ENCODE measurements at regions of chr18 and their contacts with region 1.

Region 1: DNA sequence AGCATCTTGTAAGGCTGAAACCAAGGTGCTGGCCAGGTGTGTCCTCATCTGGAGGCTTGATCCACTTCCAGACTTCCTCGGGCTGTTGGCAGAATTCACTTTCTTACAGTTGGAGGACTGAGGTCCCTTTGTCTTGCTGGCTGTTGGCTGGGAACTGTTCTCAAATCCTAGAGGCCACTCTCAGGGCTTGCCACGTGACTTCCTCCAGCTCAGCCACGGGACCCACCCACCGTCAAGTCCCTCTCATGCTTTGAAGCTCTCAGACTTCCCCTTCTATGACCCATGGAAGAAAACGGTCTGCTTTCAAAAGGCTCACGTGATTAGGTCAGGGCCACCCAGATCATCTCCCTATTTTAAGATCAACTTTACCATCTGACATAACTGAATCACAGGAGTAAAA is 77.1 kb downstream of the SMAD4 start:
- DNase-seq: no peak
- ATAC-seq: no peak

Region 2: GRCh38 chr18:51537487-51537886 is 430.4 kb after region 1 on chr18:
- intact Hi-C with region 1: loop called (anchors 5 kb)
- DNase-seq: peak; percentile 52
- ATAC-seq: peak; percentile 94

Measured in Right ventricle myocardium superior (tissue), 1 donor.